ENCODE measurements at regions of chr10 and their contacts with region 1.

Region 1: GRCh38 chr10:99976886-99977665 is 32.7 kb downstream of the DNMBP start:
- DNase-seq: no peak
- ATAC-seq: no peak
- H3K4me3 Mint-ChIP-seq: no peak overlapping the region
- H3K27ac Mint-ChIP-seq: peak overlapping the region; percentile 57
- H3K4me1 Mint-ChIP-seq: peaks cover 77% of the 10 kb centered on the region
- H3K27me3 Mint-ChIP-seq: no peaks in the 10 kb centered on the region
- CTCF ChIP-seq: no peak

Region 2: GRCh38 chr10:100009793-100010676 is 33.0 kb after region 1 on chr10 and contains the start of gene DNMBP:
- CTCF ChIA-PET with region 1: interaction called, 11 read pairs
- POLR2A ChIA-PET with region 1: interaction called, 15 read pairs
- intact Hi-C with region 1: loop called (anchors 1 kb)
- DNase-seq: peak; percentile 88
- ATAC-seq: peak; percentile 88
- H3K4me3 Mint-ChIP-seq: peak within 1 kb of the TSS; percentile 91
- H3K27ac Mint-ChIP-seq: peak within 1 kb of the TSS; percentile 89
- H3K4me1 Mint-ChIP-seq: peaks cover 75% of the 10 kb centered on the region
- H3K27me3 Mint-ChIP-seq: no peaks in the 10 kb centered on the region
- CTCF ChIP-seq: no peak
- total RNA-seq, gene DNMBP: 12.5 and 13.1 TPM in 2 replicates